HepG2 (cell line): ENCODE measurements at regions of chr9 and their contacts with region 1.

Region 1: GRCh38 chr9:136118320-136119060 is at the start of gene TMEM250:
- DNase-seq: peak; percentile 92
- ATAC-seq: peak; percentile 73
- H3K4me3 ChIP-seq: peak within 1 kb of the TSS; percentile 60 to 88 (median 83)
- H3K27ac ChIP-seq: peak within 1 kb of the TSS; percentile 96
- H3K4me1 ChIP-seq: peaks cover 40% of the 10 kb centered on the region
- H3K27me3 ChIP-seq: peaks cover 0 to 5% of the 10 kb centered on the region in 2 experiments; a peak in 1 of 5 replicates
- CTCF ChIP-seq: peak; percentile 54
- EP300 ChIP-seq: peak in 1 of 2 experiments; percentile 22; a peak in 1 of 4 replicates
- POLR2A ChIP-seq: no peak; a peak in 1 of 4 replicates
- RAD21 ChIP-seq: peak; percentile 53; the same call in 1 of the 2 replicates
- total RNA-seq, gene TMEM250: 12.0 and 13.9 TPM in 2 replicates

Region 2: DNA sequence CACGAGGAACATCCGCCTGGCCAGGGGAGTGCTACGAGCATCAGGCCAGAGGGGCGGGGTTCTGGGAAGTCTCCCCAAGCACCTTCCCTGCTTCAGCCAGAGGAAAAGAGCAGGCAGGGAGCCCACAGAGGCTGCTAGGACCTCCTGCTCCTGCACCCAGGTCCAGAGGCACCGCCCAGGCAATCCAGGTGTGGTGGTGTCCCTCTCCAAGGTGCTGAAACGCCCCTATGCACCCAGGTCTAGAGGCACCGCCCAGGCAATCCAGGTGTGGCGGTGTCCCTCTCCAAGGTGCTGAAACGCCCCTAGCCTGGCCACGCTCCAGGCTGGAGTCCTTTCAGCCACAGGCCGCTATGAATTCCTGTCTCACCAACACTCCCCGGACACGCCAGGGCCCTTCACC is 146.6 kb before region 1 on chr9:
- CTCF ChIA-PET with region 1: interaction called, 40 read pairs
- POLR2A ChIA-PET with region 1: interaction called, 5 read pairs
- in situ Hi-C with region 1: no loop called
- intact Hi-C with region 1: loop called (anchors 1 kb)
- DNase-seq: peak; percentile 71
- ATAC-seq: peak; percentile 67
- H3K4me3 ChIP-seq: no peak overlapping the region
- H3K27ac ChIP-seq: no peak overlapping the region
- H3K4me1 ChIP-seq: no peaks in the 10 kb centered on the region
- H3K27me3 ChIP-seq: peaks cover 2 to 26% of the 10 kb centered on the region in 2 experiments; a peak in 3 of 5 replicates
- CTCF ChIP-seq: no peak
- EP300 ChIP-seq: 0 out of 4 replicates have a peak, but pooled peaks of 1 of the 2 experiments have one; percentile 24
- POLR2A ChIP-seq: no peak
- RAD21 ChIP-seq: peak; percentile 40; the same call in 1 of the 2 replicates

Region 3: DNA sequence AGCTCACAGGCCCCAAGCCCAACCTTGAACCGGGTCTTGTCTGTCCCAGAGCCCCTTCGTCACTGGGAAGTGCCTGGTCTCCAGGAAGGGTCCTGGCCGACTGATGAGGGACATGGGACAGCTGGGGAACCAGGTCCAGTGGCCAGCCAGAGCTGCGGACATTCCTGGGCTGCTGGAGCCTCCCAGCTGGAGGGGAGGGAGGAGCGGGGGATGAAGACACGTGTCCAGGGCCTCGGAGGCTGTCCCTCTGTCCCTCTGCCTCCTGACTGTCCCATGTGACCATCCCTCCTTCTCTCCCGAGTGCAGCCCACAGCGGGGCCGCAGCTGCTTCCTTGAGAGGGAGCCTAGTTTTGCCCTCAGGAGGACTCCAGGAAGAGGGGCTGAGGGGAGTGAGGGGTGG is 115.6 kb before region 1 on chr9:
- CTCF ChIA-PET with region 1: no interaction called
- POLR2A ChIA-PET with region 1: interaction called, 11 read pairs
- in situ Hi-C with region 1: no loop called
- intact Hi-C with region 1: no loop called
- DNase-seq: no peak
- ATAC-seq: peak; percentile 51
- H3K4me3 ChIP-seq: peak overlapping the region; percentile 33 to 68 (median 34); a peak in 5 of 6 replicates
- H3K27ac ChIP-seq: no peak overlapping the region
- H3K4me1 ChIP-seq: peaks cover 88% of the 10 kb centered on the region
- H3K27me3 ChIP-seq: no peaks in the 10 kb centered on the region; a peak in 1 of 5 replicates
- CTCF ChIP-seq: peak; percentile 17
- EP300 ChIP-seq: no peak
- POLR2A ChIP-seq: no peak
- RAD21 ChIP-seq: no peak

Region 4: GRCh38 chr9:136051517-136052432 is 66.7 kb before region 1 on chr9:
- CTCF ChIA-PET with region 1: no interaction called
- POLR2A ChIA-PET with region 1: interaction called, 13 read pairs
- in situ Hi-C with region 1: no loop called
- intact Hi-C with region 1: no loop called
- DNase-seq: peak; percentile 96
- ATAC-seq: peak; percentile 80
- H3K4me3 ChIP-seq: peak overlapping the region; percentile 49 to 72 (median 67); a peak in 5 of 6 replicates
- H3K27ac ChIP-seq: peak overlapping the region; percentile 75
- H3K4me1 ChIP-seq: peaks cover 33% of the 10 kb centered on the region
- H3K27me3 ChIP-seq: no peaks in the 10 kb centered on the region
- CTCF ChIP-seq: no peak
- EP300 ChIP-seq: peak in 1 of 2 experiments; percentile 57; a peak in 1 of 4 replicates
- POLR2A ChIP-seq: peak in 1 of 2 experiments; percentile 61; a peak in 2 of 4 replicates
- RAD21 ChIP-seq: no peak